ENCODE measurements at regions of chr4 and their contacts with region 1.

Region 1: GRCh38 chr4:10006231-10006600 is 15.1 kb downstream of the SLC2A9 start:
- DNase-seq: peak in 1 of 2 donors; percentile 24
- ATAC-seq: peak; percentile 82 to 95 (median 87)
- H3K4me3 ChIP-seq: no peak overlapping the region
- H3K27ac ChIP-seq: peak overlapping the region in 7 of 10 donors; percentile 16 to 76 (median 55)
- H3K4me1 ChIP-seq: peaks cover 4 to 55% (median 40%) of the 10 kb centered on the region in 9 donors
- H3K27me3 ChIP-seq: no peaks in the 10 kb centered on the region
- CTCF ChIP-seq: no peak

Region 2: GRCh38 chr4:9898596-9899305 is 107.5 kb before region 1 on chr4:
- intact Hi-C with region 1: loop called in 6 of 10 experiments (anchors 5 to 10 kb)
- DNase-seq: peak; percentile 46 to 65
- ATAC-seq: peak; percentile 88 to 95 (median 91)
- H3K4me3 ChIP-seq: no peak overlapping the region
- H3K27ac ChIP-seq: no peak overlapping the region
- H3K4me1 ChIP-seq: peaks cover 0 to 18% (median 5%) of the 10 kb centered on the region in 9 donors
- H3K27me3 ChIP-seq: no peaks in the 10 kb centered on the region
- CTCF ChIP-seq: peak; percentile 23 to 71 (median 58)

Region 3: DNA sequence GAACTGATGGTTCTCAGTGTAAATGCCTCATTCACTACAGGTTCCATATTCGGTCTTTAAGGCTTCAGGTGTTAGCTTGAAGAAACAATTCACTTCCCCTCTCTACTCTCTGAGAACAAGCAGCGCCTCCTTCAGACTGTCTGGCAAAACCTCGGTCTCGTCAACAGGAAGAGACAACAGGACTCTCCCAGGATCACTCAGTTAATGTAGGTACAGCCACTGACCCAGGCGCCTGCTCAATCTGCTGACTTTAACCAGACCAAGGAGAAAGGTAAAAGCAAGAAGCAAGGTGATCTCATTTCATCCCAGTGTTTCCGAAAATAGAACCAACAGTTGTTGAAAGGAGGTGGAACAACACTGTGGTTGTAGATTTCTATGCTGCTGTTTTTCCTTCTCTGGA is 87.2 kb before region 1 on chr4:
- intact Hi-C with region 1: loop called in 2 of 10 experiments (anchors 10 kb)
- DNase-seq: no peak
- ATAC-seq: peak in 5 of 8 donors; percentile 5 to 23 (median 12)
- H3K4me3 ChIP-seq: no peak overlapping the region
- H3K27ac ChIP-seq: peak overlapping the region in 3 of 10 donors; percentile 17 to 64 (median 34)
- H3K4me1 ChIP-seq: peaks cover 0 to 17% (median 0%) of the 10 kb centered on the region in 9 donors
- H3K27me3 ChIP-seq: no peaks in the 10 kb centered on the region
- CTCF ChIP-seq: no peak

Measured in heart right ventricle (tissue), 16 donors.